ENCODE measurements at regions of chr11 and their contacts with region 1.

Region 1: DNA sequence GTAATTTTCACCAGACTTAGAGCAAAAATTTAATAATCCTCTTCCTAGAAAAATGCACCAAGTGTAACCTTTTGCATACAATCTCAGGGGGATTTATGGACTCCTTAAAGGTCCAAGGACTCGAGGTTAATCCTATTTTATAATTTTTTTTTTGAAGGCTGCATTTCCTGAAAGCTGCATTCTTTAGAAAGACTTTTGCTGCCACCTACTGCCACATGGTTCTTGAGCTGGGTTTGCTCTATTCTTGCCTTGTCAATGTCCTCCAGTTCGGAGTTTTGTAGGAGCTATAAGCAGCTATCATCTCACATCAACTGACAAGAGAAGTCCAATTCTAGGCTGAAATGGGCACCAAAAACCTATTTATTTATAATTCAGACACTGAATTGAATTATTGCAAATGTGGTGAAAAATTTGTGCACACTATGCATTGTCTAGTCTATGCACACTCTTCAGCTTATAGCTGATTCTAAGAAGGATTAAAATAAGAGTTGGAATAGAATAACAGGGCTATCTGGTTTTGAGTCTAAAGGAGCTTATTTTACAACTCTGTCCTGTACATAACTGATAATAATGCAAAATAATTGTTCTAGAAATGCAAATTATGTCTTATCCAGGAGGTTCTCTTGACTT is 31.3 kb downstream of the TRAF6 start:
- DNase-seq: peak; percentile 47
- H3K4me3 Mint-ChIP-seq: no peak overlapping the region
- H3K27ac Mint-ChIP-seq: no peak overlapping the region
- H3K4me1 Mint-ChIP-seq: peaks cover 6% of the 10 kb centered on the region
- H3K27me3 Mint-ChIP-seq: peaks cover 2% of the 10 kb centered on the region

Region 2: DNA sequence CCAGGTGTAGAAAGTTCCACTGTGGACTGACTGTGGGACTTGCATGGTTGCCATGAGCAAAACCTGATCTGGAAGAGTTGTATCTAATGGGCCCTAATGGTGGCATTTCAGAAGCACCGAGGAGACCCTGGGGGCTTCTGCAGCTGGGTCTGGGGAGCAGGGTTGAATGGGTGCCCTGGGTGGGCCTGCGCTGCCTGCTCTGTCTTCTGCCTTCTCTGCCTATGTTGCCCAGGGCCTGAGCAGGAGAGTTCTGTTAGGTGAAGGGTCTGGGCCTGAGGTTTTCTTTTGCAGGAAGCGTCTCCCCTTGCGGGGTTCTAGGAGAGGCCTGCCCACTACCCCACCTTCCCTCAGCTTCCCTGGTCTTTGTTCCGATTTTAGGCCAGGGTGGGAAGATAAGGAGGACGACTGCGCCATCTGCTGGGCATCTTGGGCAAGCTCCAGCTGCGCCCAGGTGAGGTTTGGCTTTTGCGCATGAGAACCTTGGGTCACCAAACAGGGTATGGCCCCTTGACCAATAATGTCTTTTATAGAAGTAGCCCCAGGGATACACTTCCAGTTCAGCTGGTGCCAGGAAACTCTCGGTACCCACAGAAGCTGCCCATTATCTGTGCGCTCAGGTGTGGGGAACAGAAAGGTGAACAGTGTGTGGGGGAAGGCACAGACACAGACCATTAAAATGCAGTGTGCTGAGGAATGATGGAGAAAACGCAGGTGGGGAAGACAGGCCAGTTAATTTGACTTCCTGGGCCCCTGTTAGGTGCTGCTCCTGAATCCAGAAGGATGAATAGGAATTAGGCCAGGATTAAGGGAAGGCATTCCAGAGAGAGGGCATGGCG is 212.8 kb before region 1 on chr11:
- CTCF ChIA-PET with region 1: interaction called, 17 read pairs
- POLR2A ChIA-PET with region 1: no interaction called
- DNase-seq: peak; percentile 59
- H3K4me3 Mint-ChIP-seq: no peak overlapping the region
- H3K27ac Mint-ChIP-seq: no peak overlapping the region
- H3K4me1 Mint-ChIP-seq: peaks cover 1% of the 10 kb centered on the region
- H3K27me3 Mint-ChIP-seq: peaks cover 15% of the 10 kb centered on the region

Region 3: DNA sequence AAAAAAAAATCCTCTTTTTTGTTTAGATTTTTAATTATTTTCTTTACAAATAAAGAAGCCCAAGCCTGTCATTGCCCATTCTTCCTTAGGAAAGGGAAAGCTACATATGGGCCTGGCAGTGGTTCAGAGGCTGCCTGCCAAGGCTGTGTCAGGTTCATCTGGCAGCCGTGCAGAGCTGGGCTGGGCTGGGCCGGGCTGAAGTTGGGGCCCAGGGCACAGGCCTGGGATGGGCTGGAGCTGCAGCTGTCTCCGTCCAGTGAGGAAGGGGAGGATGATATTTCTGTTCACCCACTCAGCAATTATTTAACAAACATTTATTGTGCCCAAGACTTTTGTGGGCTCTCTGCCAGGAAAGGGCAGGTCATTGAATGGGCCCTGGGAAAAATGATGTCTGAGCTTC is 178.2 kb before region 1 on chr11:
- CTCF ChIA-PET with region 1: interaction called, 18 read pairs
- POLR2A ChIA-PET with region 1: no interaction called
- DNase-seq: no peak
- H3K4me3 Mint-ChIP-seq: no peak overlapping the region
- H3K27ac Mint-ChIP-seq: no peak overlapping the region
- H3K4me1 Mint-ChIP-seq: no peaks in the 10 kb centered on the region
- H3K27me3 Mint-ChIP-seq: peaks cover 5% of the 10 kb centered on the region

Region 4: GRCh38 chr11:36354221-36355003 is 124.4 kb before region 1 on chr11:
- CTCF ChIA-PET with region 1: interaction called, 22 read pairs
- POLR2A ChIA-PET with region 1: interaction called, 3 read pairs
- DNase-seq: no peak
- H3K4me3 Mint-ChIP-seq: peak overlapping the region; percentile 1
- H3K27ac Mint-ChIP-seq: no peak overlapping the region
- H3K4me1 Mint-ChIP-seq: peaks cover 60% of the 10 kb centered on the region
- H3K27me3 Mint-ChIP-seq: peaks cover 37% of the 10 kb centered on the region

Region 5: DNA sequence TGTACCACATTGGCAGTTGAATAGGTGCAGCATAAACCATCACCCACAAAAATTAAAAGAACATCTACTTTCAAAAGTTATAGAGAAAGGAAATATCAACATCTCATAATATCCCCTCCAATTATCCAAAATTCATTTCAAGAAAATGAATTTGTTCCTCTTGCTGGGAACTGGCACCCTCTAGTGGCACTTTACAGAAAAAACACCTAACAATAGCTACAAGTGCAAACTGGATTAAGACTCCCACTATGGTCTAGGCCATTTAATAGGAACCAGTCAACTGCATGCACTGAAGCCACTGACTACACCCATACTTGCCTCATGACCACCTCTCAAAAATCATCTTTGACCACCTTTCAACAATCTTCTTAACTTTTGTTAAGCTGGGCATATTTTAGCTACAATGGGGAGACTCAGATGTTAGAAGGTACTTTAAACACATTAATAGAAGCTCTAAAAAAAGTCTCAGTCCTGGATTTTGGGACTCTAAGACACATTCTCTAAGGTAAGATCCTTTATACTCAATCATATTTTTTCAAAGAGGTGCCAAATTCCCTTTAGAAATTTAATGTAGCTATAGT is 14.0 kb after region 1 on chr11:
- CTCF ChIA-PET with region 1: interaction called, 24 read pairs
- POLR2A ChIA-PET with region 1: interaction called, 3 read pairs
- DNase-seq: peak; percentile 34
- H3K4me3 Mint-ChIP-seq: no peak overlapping the region
- H3K27ac Mint-ChIP-seq: peak overlapping the region; percentile 18
- H3K4me1 Mint-ChIP-seq: peaks cover 15% of the 10 kb centered on the region
- H3K27me3 Mint-ChIP-seq: no peaks in the 10 kb centered on the region

Region 6: GRCh38 chr11:36635066-36635862 is 156.4 kb after region 1 on chr11:
- CTCF ChIA-PET with region 1: no interaction called
- POLR2A ChIA-PET with region 1: no interaction called
- DNase-seq: no peak
- H3K4me3 Mint-ChIP-seq: no peak overlapping the region
- H3K27ac Mint-ChIP-seq: no peak overlapping the region
- H3K4me1 Mint-ChIP-seq: peaks cover 2% of the 10 kb centered on the region
- H3K27me3 Mint-ChIP-seq: peaks cover 11% of the 10 kb centered on the region